Cardiac septum (tissue), 1 donor: ENCODE measurements at regions of chr2 and their contacts with region 1.

Region 1: GRCh38 chr2:237627441-237628246 is at the start of gene LRRFIP1:
- DNase-seq: no peak
- total RNA-seq, gene LRRFIP1: 157 TPM

Region 2: GRCh38 chr2:237590272-237591140 is 37.1 kb before region 1 on chr2 and contains the start of gene RAB17:
- intact Hi-C with region 1: no loop called
- DNase-seq: no peak
- total RNA-seq, gene RAB17: 3.5 TPM

Region 3: DNA sequence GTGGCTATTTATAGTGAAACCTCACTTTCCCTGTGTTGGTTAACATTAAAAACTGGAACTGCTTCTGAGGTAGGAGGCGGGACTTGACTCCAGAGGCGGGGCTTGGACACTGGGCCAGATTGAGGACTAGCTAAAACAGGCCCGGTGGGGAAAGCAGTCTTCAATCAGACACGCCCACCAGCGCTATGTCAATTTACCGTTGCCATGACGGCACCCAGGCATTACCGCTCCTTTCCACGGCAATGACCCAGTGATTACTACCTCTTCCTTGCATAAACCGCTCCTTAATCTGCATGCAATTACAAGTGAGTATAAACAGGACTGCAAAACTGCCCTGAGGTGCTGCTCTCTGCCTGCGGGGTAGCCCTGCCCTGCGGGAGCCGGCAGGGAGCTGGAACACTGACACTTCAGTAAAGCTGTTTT is 35.0 kb after region 1 on chr2:
- intact Hi-C with region 1: loop called (anchors 5 kb)
- DNase-seq: peak; percentile 89